ENCODE measurements at regions of chr6 and their contacts with region 1.

Region 1: DNA sequence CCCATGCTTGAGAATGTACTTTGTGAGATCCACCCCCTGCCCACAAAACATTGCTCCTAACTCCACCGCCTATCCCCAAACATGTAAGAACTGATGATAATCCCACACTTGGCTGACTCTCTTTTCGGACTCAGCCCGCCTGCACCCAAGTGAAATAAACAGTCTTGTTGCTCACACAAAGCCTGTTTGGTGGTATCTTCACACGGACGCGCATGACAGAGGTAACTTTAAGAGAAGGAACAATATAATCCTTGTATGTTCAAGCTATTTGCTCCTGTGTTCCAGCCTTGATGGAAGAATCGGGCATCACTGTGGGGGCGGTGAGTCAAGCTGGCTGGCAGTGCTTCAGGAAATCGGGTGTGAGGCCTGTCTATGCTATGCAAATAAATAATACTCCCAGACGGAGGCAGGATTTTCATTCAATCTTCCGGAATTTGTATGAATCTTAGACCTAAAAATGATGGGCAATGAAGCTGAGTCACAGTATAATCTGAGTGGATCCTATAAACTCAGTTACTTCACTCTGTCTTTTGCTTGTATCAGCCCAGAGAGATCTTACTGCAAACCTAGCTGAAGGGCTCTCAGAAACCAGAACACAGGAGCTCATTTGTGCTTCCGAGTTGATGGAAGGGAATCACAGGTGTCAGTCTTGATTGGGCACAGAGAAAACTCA is 45.2 kb upstream of the NT5E start:
- DNase-seq: peak; percentile 82
- ATAC-seq: peak; percentile 63
- H3K4me3 ChIP-seq: peak overlapping the region; percentile 45 to 55 (median 50)
- H3K27ac ChIP-seq: peak overlapping the region; percentile 98
- H3K4me1 ChIP-seq: peaks cover 98% of the 10 kb centered on the region
- H3K27me3 ChIP-seq: no peaks in the 10 kb centered on the region
- CTCF ChIP-seq: no peak
- EP300 ChIP-seq: peak in 1 of 2 experiments; percentile 57; a peak in 2 of 4 replicates
- POLR2A ChIP-seq: 0 out of 4 replicates have a peak, but pooled peaks of 1 of the 2 experiments have one; percentile 28
- RAD21 ChIP-seq: no peak

Region 2: DNA sequence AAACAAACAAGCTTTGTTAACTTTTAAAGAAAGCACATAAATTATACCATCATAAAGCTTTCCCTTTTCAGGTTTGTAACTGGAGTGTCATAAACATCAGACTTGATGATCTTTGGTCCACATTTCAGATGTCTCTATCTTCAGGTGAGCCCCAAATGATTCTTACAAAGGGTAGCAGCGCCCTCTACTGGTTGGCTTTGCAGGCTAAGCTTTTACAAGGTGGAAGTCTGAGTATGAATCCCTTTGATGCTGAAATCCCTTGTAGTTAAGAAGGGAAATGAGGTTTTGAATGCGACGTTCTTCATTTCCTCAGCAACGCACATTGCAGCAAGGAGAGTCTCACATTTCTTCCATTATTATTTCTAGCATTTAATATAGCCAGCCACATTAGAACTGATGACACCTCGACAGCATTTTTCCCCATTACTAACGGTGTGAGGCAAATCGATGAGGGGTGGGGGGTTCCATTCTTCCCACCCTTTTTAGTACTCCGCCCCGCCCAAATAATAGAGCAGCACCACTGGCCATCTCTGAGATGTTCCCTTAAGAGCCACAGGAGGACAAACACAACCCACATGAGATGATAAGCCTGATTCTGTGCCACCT is 81.1 kb before region 1 on chr6:
- CTCF ChIA-PET with region 1: no interaction called
- POLR2A ChIA-PET with region 1: no interaction called
- in situ Hi-C with region 1: no loop called
- intact Hi-C with region 1: no loop called
- DNase-seq: peak; percentile 72
- ATAC-seq: peak; percentile 96
- H3K4me3 ChIP-seq: no peak overlapping the region
- H3K27ac ChIP-seq: no peak overlapping the region
- H3K4me1 ChIP-seq: no peaks in the 10 kb centered on the region
- H3K27me3 ChIP-seq: peaks cover 0 to 4% of the 10 kb centered on the region in 2 experiments; a peak in 1 of 5 replicates
- CTCF ChIP-seq: peak; percentile 88
- EP300 ChIP-seq: no peak
- POLR2A ChIP-seq: no peak
- RAD21 ChIP-seq: peak; percentile 61; the same call in 1 of the 2 replicates

Region 3: GRCh38 chr6:85360794-85361642 is 43.6 kb before region 1 on chr6:
- CTCF ChIA-PET with region 1: no interaction called
- POLR2A ChIA-PET with region 1: interaction called, 21 read pairs
- in situ Hi-C with region 1: no loop called
- intact Hi-C with region 1: loop called (anchors 2 kb)
- DNase-seq: peak; percentile 43
- ATAC-seq: peak; percentile 61
- H3K4me3 ChIP-seq: no peak overlapping the region
- H3K27ac ChIP-seq: no peak overlapping the region
- H3K4me1 ChIP-seq: peaks cover 20% of the 10 kb centered on the region
- H3K27me3 ChIP-seq: no peaks in the 10 kb centered on the region
- CTCF ChIP-seq: no peak
- EP300 ChIP-seq: no peak
- POLR2A ChIP-seq: no peak
- RAD21 ChIP-seq: no peak

Region 4: DNA sequence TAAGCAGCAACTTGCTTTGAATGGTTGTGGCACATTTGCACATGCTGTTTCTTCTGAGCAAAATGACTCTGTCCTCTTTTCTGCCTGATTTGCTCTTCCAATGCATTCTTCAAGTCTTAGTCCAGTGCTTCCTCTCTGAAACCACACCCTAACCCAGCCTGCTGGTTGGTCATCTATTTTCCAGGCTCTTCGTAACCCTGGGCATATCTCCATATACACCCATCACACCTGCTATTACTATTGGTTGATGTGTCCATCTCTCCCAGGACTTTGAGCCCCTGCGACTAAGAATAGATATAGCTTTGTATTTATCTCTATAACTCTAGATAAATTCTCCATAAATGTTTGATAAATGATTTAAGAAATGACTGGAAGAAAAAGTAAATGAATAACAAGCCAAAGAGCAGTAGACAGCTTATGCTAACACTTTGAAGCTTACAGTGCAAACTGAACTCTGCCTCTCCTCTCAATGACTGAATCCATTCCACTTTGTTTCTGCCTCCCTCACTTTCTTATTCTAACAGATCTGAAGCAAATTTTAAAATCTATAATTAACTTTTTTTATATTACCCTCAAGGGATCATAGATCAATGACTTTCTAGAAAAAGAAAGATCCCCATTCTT is 14.4 kb before region 1 on chr6:
- CTCF ChIA-PET with region 1: no interaction called
- POLR2A ChIA-PET with region 1: interaction called, 17 read pairs
- in situ Hi-C with region 1: no loop called
- intact Hi-C with region 1: loop called (anchors 2 kb)
- DNase-seq: peak; percentile 87
- ATAC-seq: peak; percentile 98
- H3K4me3 ChIP-seq: no peak overlapping the region; a peak in 2 of 6 replicates
- H3K27ac ChIP-seq: peak overlapping the region; percentile 71
- H3K4me1 ChIP-seq: peaks cover 56% of the 10 kb centered on the region
- H3K27me3 ChIP-seq: no peaks in the 10 kb centered on the region
- CTCF ChIP-seq: no peak
- EP300 ChIP-seq: 0 out of 4 replicates have a peak, but pooled peaks of 1 of the 2 experiments have one; percentile 3
- POLR2A ChIP-seq: no peak
- RAD21 ChIP-seq: no peak

Region 5: DNA sequence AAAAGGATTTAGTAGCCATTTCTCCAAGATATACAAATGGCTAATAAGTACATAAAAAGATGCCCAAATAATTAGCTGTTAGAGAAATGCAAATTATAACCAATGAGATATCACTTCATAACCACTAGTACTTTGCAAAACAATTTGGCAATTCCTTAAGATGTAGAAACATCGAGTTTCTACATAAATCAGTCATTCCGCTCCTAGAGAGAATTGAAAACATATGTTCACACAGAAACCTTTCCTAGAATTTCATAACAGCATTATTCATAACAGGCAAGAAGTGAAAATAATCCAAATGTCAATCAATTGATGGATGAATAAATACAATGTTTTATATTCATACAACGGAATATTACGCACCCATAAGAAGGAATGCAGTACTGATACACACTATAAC is 24.7 kb after region 1 on chr6:
- CTCF ChIA-PET with region 1: no interaction called
- POLR2A ChIA-PET with region 1: no interaction called
- in situ Hi-C with region 1: no loop called
- intact Hi-C with region 1: no loop called
- DNase-seq: no peak
- ATAC-seq: no peak
- H3K4me3 ChIP-seq: no peak overlapping the region
- H3K27ac ChIP-seq: no peak overlapping the region
- H3K4me1 ChIP-seq: peaks cover 7% of the 10 kb centered on the region; the same call in 1 of the 2 replicates
- H3K27me3 ChIP-seq: no peaks in the 10 kb centered on the region
- CTCF ChIP-seq: no peak
- EP300 ChIP-seq: no peak
- POLR2A ChIP-seq: no peak
- RAD21 ChIP-seq: no peak

Region 6: DNA sequence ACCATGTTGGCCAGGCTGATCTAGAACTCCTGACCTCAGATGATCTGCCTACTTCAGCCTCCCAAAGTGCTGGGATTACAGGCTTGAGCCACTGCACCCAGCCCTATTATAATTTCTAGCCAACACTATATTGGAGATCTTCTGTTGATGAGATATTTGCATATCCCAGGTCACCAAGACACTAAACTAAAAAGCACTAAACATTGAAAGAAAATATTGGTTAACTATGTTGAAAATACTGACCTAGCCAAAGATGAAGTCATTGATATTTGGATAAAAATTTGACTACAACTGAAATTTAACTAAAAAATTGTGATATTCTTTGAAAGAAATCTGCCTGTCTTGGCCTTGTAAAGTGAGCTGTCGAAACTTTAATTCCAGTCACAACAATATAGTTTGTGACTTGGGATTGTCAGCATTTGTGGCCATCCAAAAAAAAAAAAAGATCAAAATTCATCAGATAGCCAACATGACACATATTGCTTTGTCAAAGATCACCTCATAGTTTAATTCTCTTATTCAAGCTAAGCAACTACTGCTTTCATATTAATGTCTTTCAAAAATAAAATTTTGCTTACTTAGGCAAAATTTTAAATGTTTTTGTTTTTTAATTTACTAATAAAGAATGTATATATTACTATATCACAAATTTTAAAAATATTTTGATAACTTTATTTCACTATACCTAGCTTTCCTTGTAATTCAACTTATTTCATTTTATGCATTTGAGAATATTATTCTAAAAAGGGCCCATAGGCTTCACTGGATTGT is 38.9 kb after region 1 on chr6:
- CTCF ChIA-PET with region 1: no interaction called
- POLR2A ChIA-PET with region 1: interaction called, 7 read pairs
- in situ Hi-C with region 1: loop called (anchors 5 kb)
- intact Hi-C with region 1: no loop called
- DNase-seq: no peak
- ATAC-seq: no peak
- H3K4me3 ChIP-seq: no peak overlapping the region
- H3K27ac ChIP-seq: no peak overlapping the region
- H3K4me1 ChIP-seq: peaks cover 29% of the 10 kb centered on the region
- H3K27me3 ChIP-seq: no peaks in the 10 kb centered on the region; a peak in 1 of 5 replicates
- CTCF ChIP-seq: no peak
- EP300 ChIP-seq: no peak
- POLR2A ChIP-seq: no peak
- RAD21 ChIP-seq: no peak

Region 7: DNA sequence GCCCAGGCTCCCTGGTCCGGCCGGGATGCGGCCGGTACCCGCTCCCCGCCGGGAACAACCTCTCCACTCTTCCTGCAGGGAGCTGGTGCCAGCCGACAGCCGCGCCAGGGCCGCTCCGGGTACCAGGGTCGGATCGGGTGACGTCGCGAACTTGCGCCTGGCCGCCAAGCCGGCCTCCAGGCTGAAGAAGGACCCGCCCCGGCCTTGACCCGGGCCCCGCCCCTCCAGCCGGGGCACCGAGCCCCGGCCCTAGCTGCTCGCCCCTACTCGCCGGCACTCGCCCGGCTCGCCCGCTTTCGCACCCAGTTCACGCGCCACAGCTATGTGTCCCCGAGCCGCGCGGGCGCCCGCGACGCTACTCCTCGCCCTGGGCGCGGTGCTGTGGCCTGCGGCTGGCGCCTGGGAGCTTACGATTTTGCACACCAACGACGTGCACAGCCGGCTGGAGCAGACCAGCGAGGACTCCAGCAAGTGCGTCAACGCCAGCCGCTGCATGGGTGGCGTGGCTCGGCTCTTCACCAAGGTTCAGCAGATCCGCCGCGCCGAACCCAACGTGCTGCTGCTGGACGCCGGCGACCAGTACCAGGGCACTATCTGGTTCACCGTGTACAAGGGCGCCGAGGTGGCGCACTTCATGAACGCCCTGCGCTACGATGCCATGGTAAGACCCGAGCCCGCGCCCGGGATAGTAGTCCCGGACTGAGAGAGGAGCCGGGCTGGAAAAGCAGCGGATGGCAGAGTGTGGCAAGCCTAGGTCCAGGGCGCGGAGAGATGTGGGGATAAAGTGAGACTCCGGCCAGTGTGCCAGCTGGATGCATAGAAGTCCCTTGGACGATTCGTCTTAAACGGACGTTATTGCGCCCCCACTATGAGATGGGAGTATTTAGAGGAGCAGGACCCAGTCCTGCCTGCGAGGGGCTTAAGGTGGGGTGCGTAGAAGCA is 45.5 kb after region 1 on chr6 and contains the start of gene NT5E:
- CTCF ChIA-PET with region 1: no interaction called
- POLR2A ChIA-PET with region 1: interaction called, 99 read pairs
- in situ Hi-C with region 1: no loop called
- intact Hi-C with region 1: loop called (anchors 1 kb)
- DNase-seq: peak; percentile 24
- ATAC-seq: peak; percentile 79
- H3K4me3 ChIP-seq: peak within 1 kb of the TSS; percentile 76 to 88 (median 79)
- H3K27ac ChIP-seq: peak within 1 kb of the TSS; percentile 84
- H3K4me1 ChIP-seq: peaks cover 69% of the 10 kb centered on the region
- H3K27me3 ChIP-seq: no peaks in the 10 kb centered on the region; a peak in 1 of 5 replicates
- CTCF ChIP-seq: peak; percentile 38; the same call in 1 of the 2 replicates
- EP300 ChIP-seq: 0 out of 4 replicates have a peak, but pooled peaks of 1 of the 2 experiments have one; percentile 11
- POLR2A ChIP-seq: peak; percentile 49 to 83; a peak in 3 of 4 replicates
- RAD21 ChIP-seq: 0 out of 2 replicates have a peak, but pooled peaks have one; percentile 20
- total RNA-seq, gene NT5E: 6.4 and 9.5 TPM in 2 replicates

Region 8: DNA sequence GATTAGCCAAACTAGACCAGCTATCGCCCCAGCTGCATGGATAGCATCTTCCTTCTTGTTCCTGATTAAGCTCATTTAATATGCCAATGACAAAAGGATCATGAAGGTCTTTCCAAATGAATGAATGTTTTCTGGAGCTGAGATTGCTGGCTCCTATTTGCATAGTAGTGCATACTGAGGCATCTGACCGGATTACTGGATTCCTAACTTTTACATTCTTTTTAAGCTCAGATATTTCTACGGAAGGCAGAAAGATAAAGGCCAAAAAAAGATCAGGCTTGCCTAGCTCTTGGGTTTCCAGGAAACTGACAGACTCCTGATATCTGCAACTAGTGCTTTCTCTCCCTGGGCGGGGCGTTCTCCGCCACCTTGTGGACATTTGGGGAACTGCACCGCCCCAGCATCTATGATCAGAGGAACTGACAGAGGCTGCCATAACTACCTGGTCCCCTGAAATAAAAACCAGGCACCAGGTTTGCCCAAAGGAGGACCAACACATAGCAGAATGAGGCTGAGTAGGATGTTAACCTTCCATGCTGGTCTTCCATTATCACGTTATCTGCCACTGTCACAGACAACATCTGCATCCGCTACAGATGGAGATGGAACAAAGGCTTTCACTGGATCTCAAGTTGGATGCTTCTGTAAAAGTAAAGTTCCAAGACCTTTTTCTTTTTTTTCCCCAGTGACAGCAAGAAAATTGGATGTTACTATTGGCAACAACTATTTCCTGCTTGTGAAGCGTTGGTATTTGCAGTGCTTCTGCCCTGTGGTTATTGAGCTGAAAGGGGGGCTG is 78.5 kb after region 1 on chr6:
- CTCF ChIA-PET with region 1: no interaction called
- POLR2A ChIA-PET with region 1: interaction called, 8 read pairs
- in situ Hi-C with region 1: no loop called
- intact Hi-C with region 1: loop called (anchors 1 kb)
- DNase-seq: peak; percentile 50
- ATAC-seq: peak; percentile 94
- H3K4me3 ChIP-seq: no peak overlapping the region; a peak in 1 of 6 replicates
- H3K27ac ChIP-seq: no peak overlapping the region
- H3K4me1 ChIP-seq: peaks cover 7% of the 10 kb centered on the region; the same call in 1 of the 2 replicates
- H3K27me3 ChIP-seq: no peaks in the 10 kb centered on the region
- CTCF ChIP-seq: peak; percentile 94
- EP300 ChIP-seq: no peak
- POLR2A ChIP-seq: no peak
- RAD21 ChIP-seq: peak; percentile 92

Region 9: GRCh38 chr6:85498596-85499258 is 94.1 kb after region 1 on chr6:
- CTCF ChIA-PET with region 1: no interaction called
- POLR2A ChIA-PET with region 1: no interaction called
- in situ Hi-C with region 1: no loop called
- intact Hi-C with region 1: no loop called
- DNase-seq: peak; percentile 21
- ATAC-seq: peak; percentile 33; the same call in 2 of the 3 replicates
- H3K4me3 ChIP-seq: no peak overlapping the region
- H3K27ac ChIP-seq: no peak overlapping the region
- H3K4me1 ChIP-seq: peaks cover 6% of the 10 kb centered on the region; the same call in 1 of the 2 replicates
- H3K27me3 ChIP-seq: no peaks in the 10 kb centered on the region
- CTCF ChIP-seq: no peak
- EP300 ChIP-seq: no peak
- POLR2A ChIP-seq: no peak
- RAD21 ChIP-seq: no peak

Region 10: DNA sequence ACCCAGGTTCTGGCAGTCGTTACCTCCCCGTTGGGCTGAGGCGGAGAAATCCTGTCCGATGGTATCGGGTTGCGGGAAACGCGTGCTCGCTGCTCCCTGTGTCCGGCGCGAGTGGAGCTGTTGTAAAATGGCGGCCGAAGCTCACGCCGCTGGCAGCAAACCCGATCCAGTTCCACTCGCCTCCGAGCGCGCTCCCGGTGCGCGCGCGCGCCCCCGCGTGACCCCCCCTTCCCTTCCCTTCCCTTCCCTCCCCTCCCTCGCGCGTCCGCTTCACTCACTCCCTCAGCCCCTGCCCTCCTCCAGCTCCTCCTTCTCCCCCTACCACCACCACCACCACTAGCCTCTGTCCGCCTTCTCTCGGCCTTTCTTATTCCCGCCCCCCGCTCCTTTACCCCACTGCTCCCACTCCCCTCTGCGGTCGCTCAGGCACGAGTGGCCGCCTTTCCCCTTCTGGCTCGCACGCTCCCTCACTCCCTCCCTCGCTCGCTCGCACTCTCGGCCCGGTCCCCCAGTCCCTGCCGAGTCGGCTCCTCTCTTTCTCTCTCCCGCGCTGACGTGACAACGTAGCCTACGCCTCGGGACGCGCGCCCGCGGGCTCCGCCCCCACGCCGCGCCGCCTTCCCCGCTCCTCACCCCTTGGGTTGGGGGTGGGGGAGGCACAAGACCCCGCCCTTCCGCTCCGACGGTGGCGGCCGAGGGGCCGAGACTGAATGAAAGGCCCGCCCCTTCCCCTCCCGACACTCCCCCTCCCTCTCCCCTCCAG is 238.3 kb after region 1 on chr6 and contains the start of gene SYNCRIP:
- CTCF ChIA-PET with region 1: no interaction called
- POLR2A ChIA-PET with region 1: interaction called, 15 read pairs
- in situ Hi-C with region 1: no loop called
- intact Hi-C with region 1: no loop called
- DNase-seq: peak; percentile 95
- ATAC-seq: peak; percentile 83
- H3K4me3 ChIP-seq: peak within 1 kb of the TSS; percentile 78 to 96 (median 96)
- H3K27ac ChIP-seq: peak within 1 kb of the TSS; percentile 99
- H3K4me1 ChIP-seq: peaks cover 38% of the 10 kb centered on the region
- H3K27me3 ChIP-seq: no peaks in the 10 kb centered on the region; a peak in 1 of 5 replicates
- CTCF ChIP-seq: peak; percentile 17; the same call in 1 of the 2 replicates
- EP300 ChIP-seq: peak in 1 of 2 experiments; percentile 30; a peak in 1 of 4 replicates
- POLR2A ChIP-seq: peak; percentile 79 to 97
- RAD21 ChIP-seq: no peak
- total RNA-seq, gene SYNCRIP: 112 and 183 TPM in 2 replicates